ENCODE measurements at regions of chr1 and their contacts with region 1.

Region 1: GRCh38 chr1:230772457-230773395 is 25.5 kb downstream of the CAPN9 start:
- DNase-seq: peak; percentile 56
- ATAC-seq: peak; percentile 75
- H3K4me3 ChIP-seq: no peak overlapping the region; a peak in 1 of 6 replicates
- H3K27ac ChIP-seq: no peak overlapping the region
- H3K4me1 ChIP-seq: peaks cover 34% of the 10 kb centered on the region
- H3K27me3 ChIP-seq: peaks cover 1 to 7% of the 10 kb centered on the region in 2 experiments; a peak in 3 of 5 replicates
- CTCF ChIP-seq: peak; percentile 94
- EP300 ChIP-seq: no peak
- POLR2A ChIP-seq: no peak
- RAD21 ChIP-seq: peak; percentile 89

Region 2: GRCh38 chr1:230359992-230360668 is 412.6 kb before region 1 on chr1:
- CTCF ChIA-PET with region 1: no interaction called
- POLR2A ChIA-PET with region 1: no interaction called
- in situ Hi-C with region 1: no loop called
- intact Hi-C with region 1: no loop called
- DNase-seq: no peak
- ATAC-seq: no peak
- H3K4me3 ChIP-seq: no peak overlapping the region
- H3K27ac ChIP-seq: no peak overlapping the region
- H3K4me1 ChIP-seq: no peaks in the 10 kb centered on the region
- H3K27me3 ChIP-seq: peaks cover 0 to 4% of the 10 kb centered on the region in 2 experiments; a peak in 2 of 5 replicates
- CTCF ChIP-seq: no peak
- EP300 ChIP-seq: no peak
- POLR2A ChIP-seq: no peak
- RAD21 ChIP-seq: no peak

Region 3: GRCh38 chr1:230642263-230642959 is 130.3 kb before region 1 on chr1 and contains the start of gene COG2:
- CTCF ChIA-PET with region 1: interaction called, 4 read pairs
- POLR2A ChIA-PET with region 1: interaction called, 4 read pairs
- in situ Hi-C with region 1: loop called (anchors 5 kb)
- intact Hi-C with region 1: loop called (anchors 1 kb)
- DNase-seq: peak; percentile 77
- ATAC-seq: peak; percentile 95
- H3K4me3 ChIP-seq: peak within 1 kb of the TSS; percentile 85 to 96 (median 88)
- H3K27ac ChIP-seq: peak within 1 kb of the TSS; percentile 86
- H3K4me1 ChIP-seq: peaks cover 75% of the 10 kb centered on the region
- H3K27me3 ChIP-seq: no peaks in the 10 kb centered on the region; a peak in 1 of 5 replicates
- CTCF ChIP-seq: peak; percentile 96
- EP300 ChIP-seq: no peak; a peak in 1 of 4 replicates
- POLR2A ChIP-seq: peak; percentile 67 to 88
- RAD21 ChIP-seq: peak; percentile 93
- total RNA-seq, gene COG2: 36.3 and 51.3 TPM in 2 replicates

Region 4: DNA sequence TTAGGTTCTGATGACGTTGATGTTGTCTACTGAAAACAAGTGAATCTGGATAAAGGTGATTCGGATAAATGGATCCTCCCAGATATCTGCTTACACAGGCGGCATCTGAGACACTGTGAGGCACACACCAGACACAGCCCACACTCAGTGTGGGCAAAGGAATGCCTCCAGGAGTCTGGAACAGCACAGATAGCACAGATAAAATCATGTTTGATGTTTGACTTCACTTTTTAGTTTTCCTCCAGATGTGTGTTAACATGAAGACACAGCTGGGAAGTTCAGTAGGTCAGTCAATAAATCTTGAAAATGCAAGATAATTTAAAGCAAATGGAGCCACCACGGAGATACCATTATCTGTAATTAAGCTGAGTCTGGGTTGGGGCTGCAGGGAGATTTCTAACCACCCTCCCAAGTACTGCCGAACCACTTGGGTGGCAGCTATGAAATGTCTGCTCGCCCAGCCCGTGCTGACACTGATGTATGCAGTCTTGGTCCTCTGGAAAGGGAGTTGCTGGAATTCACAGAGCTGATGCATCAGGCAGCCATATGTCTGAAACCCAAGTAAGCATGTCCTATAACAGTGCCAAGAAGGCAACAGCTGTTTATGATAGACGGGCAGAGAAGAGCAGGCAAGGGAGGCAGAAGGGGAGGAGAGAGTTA is 13.9 kb before region 1 on chr1:
- CTCF ChIA-PET with region 1: no interaction called
- POLR2A ChIA-PET with region 1: no interaction called
- in situ Hi-C with region 1: no loop called
- intact Hi-C with region 1: no loop called
- DNase-seq: no peak
- ATAC-seq: no peak
- H3K4me3 ChIP-seq: no peak overlapping the region
- H3K27ac ChIP-seq: no peak overlapping the region
- H3K4me1 ChIP-seq: peaks cover 72% of the 10 kb centered on the region
- H3K27me3 ChIP-seq: no peaks in the 10 kb centered on the region
- CTCF ChIP-seq: no peak
- EP300 ChIP-seq: no peak
- POLR2A ChIP-seq: no peak
- RAD21 ChIP-seq: no peak

Measured in HepG2 (cell line).